SK-N-SH (cell line): ENCODE measurements at regions of chr2 and their contacts with region 1.

Region 1: GRCh38 chr2:99166218-99166617 is 11.5 kb downstream of the LIPT1 start:
- DNase-seq: no peak
- H3K4me3 ChIP-seq: no peak overlapping the region
- H3K27ac ChIP-seq: no peak overlapping the region
- H3K4me1 ChIP-seq: no peaks in the 10 kb centered on the region
- H3K27me3 ChIP-seq: no peaks in the 10 kb centered on the region
- CTCF ChIP-seq: no peak
- EP300 ChIP-seq: no peak
- RAD21 ChIP-seq: no peak

Region 2: DNA sequence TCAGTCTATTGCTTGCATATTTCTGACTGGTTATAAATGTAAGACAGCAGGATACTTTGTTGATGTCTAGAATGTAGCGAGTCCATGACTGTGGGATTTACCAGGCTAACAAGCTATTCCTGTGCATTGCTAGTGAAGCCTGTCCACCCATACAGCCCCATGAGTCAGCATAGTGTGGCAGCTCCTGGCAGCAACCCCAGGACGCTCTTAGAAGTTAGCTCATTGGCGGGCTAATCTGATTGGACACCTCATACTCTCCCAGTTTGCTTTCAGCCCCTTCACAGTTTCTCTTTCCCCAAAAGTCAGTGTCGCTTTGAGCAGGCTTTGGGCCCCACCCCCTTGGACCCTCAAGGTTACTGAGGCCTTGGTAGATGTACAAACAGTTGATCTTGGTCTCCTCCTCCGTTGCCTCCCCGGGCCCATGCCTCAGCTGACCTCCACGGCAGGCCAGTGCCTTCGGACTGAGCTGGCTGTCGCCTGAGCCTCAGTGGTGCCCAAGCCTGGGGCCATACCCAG is 605.9 kb before region 1 on chr2:
- CTCF ChIA-PET with region 1: no interaction called
- POLR2A ChIA-PET with region 1: no interaction called
- DNase-seq: no peak
- H3K4me3 ChIP-seq: no peak overlapping the region
- H3K27ac ChIP-seq: peak overlapping the region in 1 of 2 experiments; percentile 51; a peak in 2 of 4 replicates
- H3K4me1 ChIP-seq: peaks cover 7 to 9% of the 10 kb centered on the region in 2 experiments; a peak in 2 of 4 replicates
- H3K27me3 ChIP-seq: no peaks in the 10 kb centered on the region
- CTCF ChIP-seq: no peak
- EP300 ChIP-seq: no peak
- RAD21 ChIP-seq: no peak

Region 3: GRCh38 chr2:99180755-99181623 is 14.8 kb after region 1 on chr2 and contains the starts of genes MITD1 and MRPL30:
- CTCF ChIA-PET with region 1: interaction called, 11 read pairs
- POLR2A ChIA-PET with region 1: no interaction called
- DNase-seq: peak; percentile 82
- H3K4me3 ChIP-seq: peak within 1 kb of the TSS; percentile 89 to 95
- H3K27ac ChIP-seq: peak within 1 kb of the TSS; percentile 69 to 91
- H3K4me1 ChIP-seq: peaks cover 0 to 16% of the 10 kb centered on the region in 2 experiments; a peak in 2 of 4 replicates
- H3K27me3 ChIP-seq: no peaks in the 10 kb centered on the region
- CTCF ChIP-seq: no peak
- EP300 ChIP-seq: no peak; a peak in 2 of 4 replicates
- RAD21 ChIP-seq: no peak
- polyA plus RNA-seq, gene MITD1: 11.8 and 15.7 TPM in 2 replicates
- polyA plus RNA-seq, gene MRPL30: 14.9 and 18.4 TPM in 2 replicates